ENCODE measurements at regions of chr19 and their contacts with region 1.

Region 1: DNA sequence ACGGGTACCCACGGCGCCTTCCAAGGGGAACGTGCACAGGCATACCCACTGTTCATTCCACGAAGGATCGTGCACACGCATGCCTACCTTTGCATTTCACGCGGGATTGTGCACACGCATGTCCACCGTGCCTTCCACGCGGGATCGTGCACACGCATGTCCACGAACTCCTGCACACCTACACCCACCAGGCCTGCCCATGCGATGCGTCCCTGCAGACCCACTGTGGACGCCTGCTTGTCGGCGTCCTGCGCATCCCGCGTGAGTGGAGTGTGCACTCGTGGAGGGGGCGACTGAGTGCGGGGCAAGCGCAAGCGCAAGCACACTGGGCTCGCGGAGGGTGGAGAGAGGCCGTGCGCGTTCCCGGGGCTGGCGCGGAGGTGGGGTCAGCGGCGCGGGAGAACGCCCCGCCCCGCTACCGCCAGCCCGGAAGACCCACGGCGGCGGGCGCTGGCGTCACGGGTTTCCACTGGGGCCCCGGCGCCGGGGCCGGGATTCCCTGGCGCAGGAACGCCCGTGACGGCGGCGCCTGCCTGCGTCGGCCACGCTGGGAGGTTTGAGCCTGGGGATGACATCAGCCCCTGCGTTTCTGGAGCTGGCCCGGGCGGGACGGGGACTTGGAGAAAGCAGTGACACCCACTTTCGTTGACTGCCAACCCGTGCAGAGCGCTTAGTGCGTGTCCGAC is 18.7 kb downstream of the GADD45B start:
- DNase-seq: peak; percentile 40
- H3K4me3 ChIP-seq: peak overlapping the region; percentile 43 to 46
- H3K27ac ChIP-seq: peak overlapping the region; percentile 94 to 96
- H3K4me1 ChIP-seq: peaks cover 21% of the 10 kb centered on the region
- H3K27me3 ChIP-seq: no peaks in the 10 kb centered on the region
- CTCF ChIP-seq: peak in 2 of 4 experiments; percentile 4 to 9
- POLR2A ChIP-seq: no peak

Region 2: DNA sequence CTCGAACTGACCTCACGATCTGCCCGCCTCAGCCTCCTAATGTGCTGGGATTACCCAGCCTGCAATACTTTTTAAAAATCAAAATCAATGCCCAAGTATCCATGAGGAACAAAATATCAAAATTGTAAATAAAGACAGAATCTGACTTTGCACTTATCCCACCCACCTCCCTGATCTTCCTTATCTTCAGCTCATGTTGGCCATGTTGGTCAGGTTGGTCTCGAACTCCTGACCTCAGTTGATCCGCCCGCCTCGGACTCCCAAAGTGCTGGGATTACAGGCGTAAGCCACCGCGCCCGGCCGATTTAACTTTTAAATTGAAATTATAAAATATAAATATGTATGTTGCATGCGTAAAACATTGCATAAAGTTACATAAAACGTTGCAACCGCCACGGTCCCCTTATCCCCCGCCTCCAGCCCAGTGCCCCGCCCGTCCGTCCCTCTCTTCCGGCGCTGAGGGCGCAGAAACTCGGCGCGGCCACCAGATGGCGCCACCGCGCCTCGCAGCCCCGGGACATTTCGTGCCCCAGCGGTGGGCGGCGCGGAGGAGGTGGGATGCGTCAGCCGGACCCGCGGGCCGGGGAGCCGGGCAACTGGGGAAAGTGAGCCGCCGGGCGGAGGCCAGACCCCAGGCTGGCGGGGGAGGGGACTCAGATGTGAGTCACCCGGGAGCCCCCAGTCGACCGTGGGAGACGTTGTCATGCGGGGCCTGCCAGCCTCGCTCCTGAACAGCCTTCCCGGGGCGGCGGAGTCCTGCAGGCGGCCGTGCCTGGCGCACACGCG is 20.2 kb before region 1 on chr19:
- intact Hi-C with region 1: no loop called
- DNase-seq: peak; percentile 78
- H3K4me3 ChIP-seq: peak overlapping the region; percentile 89
- H3K27ac ChIP-seq: peak overlapping the region; percentile 78 to 96
- H3K4me1 ChIP-seq: no peaks in the 10 kb centered on the region
- H3K27me3 ChIP-seq: no peaks in the 10 kb centered on the region
- CTCF ChIP-seq: peak; percentile 98 to 100 (median 100)
- POLR2A ChIP-seq: no peak

Region 3: DNA sequence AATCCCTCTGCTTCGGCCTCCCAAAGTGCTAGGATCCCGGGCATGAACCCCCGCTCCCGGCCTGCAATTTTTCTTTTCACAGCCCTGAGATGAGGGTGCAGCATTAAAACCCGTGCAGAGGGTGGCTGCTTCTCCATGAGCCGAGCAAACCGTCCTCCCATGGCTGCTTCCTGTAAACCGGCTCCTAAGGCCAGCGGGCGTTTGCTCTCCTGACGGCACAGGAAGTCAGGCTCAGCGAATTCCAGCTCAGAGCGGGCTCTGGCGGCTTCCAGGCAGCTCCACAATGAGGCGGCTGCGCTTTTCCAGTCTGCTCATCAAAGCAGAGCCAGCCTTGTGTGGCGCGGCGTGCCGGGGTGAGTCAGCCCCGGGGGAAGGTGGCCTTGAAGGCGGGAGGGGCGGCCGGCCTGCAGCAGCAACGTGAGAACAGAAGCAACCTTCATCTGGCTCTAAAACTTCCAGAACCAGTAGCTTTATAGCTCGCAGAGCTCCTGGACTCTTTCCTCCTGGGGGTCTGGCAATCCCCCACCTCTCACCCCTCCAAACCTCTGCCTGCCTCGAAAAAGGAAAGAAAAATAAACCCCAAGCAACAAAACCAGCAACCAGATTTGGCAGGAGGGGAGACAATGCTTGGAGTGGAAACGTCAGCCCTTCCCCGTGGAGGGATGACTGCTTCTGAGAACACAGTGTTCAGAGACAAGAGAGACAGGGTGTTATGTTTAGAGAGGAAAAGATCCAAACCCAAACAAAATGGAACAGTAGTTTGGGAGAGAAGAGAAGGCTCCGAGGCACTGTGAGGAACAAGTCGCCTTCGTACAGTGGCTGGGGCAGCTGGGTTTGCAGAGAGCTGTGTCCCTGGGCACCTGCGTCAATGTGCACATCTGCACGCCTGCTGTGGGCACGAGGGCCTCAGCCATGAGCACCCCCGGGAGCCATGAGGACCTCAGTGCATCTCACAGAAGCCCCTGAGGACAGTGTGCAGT is 49.2 kb after region 1 on chr19:
- intact Hi-C with region 1: loop called (anchors 5 kb)
- DNase-seq: peak; percentile 91
- H3K4me3 ChIP-seq: peak overlapping the region in 1 of 2 donors; percentile 10
- H3K27ac ChIP-seq: peak overlapping the region; percentile 88 to 92
- H3K4me1 ChIP-seq: peaks cover 44% of the 10 kb centered on the region
- H3K27me3 ChIP-seq: no peaks in the 10 kb centered on the region
- CTCF ChIP-seq: peak in 2 of 4 experiments; percentile 30 to 48
- POLR2A ChIP-seq: peak; percentile 38

Region 4: DNA sequence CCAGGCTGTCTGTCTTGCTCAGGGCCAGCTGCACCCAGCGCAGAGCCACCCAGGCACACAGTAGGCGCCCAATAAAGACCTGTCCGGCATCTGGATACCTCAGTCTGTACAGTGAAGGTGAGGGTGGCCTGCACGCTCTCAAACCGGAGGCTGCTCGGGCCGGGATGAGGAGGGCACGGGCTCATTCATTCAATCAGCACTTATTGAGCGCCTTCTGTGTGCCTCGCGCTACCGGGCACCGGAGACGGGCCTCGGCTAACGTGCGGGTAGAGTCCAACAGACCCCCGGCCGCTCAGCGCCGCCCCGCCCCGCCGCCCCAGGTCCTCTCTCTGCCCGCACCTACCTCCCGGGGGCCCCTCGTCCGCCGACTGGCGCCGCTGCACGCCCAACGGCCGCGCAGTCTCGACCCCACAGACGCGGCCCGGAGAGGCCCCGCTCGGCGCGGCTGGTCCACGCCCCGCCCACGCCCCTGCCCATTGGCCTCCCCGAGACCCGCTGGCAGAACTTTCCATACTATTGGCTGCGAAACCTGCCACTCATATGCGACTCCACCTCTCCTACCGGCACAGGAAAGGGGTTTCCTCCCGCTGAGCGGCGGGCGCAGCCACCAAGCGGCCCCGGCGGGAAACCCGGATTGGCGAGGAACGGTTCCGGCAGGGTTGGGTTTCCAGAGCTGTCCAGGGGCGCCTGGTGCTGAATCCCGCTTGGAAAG is 245.2 kb after region 1 on chr19 and contains the start of gene SLC39A3:
- intact Hi-C with region 1: no loop called
- DNase-seq: peak; percentile 98
- H3K4me3 ChIP-seq: peak within 1 kb of the TSS; percentile 74 to 95
- H3K27ac ChIP-seq: peak within 1 kb of the TSS in 1 of 2 donors; percentile 45
- H3K4me1 ChIP-seq: peaks cover 3% of the 10 kb centered on the region
- H3K27me3 ChIP-seq: no peaks in the 10 kb centered on the region
- CTCF ChIP-seq: peak in 3 of 4 experiments; percentile 11 to 60 (median 47)
- POLR2A ChIP-seq: peak; percentile 18
- total RNA-seq, gene SLC39A3: 46.6 to 67.9 TPM